Mammary epithelial cell (primary cell): ENCODE measurements at regions of chr17 and their contacts with region 1.

Region 1: GRCh38 chr17:8156246-8156992 is 4.2 kb upstream of the PER1 start:
- DNase-seq: peak; percentile 100
- H3K4me3 ChIP-seq: peak overlapping the region; percentile 85 to 92 (median 88)
- H3K27ac ChIP-seq: peak overlapping the region; percentile 100
- H3K4me1 ChIP-seq: peaks cover 34% of the 10 kb centered on the region
- H3K27me3 ChIP-seq: no peaks in the 10 kb centered on the region
- CTCF ChIP-seq: peak in 1 of 2 donors; percentile 18

Region 2: DNA sequence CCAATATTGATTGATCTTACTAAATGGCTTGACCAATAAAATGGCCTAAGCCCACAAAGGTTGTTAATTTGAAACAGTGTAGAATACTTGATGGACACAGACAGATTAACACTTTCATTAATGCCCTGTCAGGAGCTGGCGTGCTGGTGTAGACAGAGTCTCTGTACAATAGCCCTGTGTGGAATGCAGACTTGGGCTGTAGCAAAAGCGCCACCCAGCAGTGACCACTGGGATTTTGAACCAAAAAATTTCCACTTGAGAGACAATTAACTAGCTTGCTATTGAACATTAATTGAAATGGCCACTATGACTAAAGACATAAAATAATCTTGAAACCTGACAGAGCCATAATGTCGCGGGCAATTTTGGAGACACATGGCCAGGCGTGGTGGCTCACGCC is 173.8 kb before region 1 on chr17:
- CTCF ChIA-PET with region 1: no interaction called
- dilution Hi-C with region 1: no loop called
- in situ Hi-C with region 1: no loop called
- intact Hi-C with region 1: no loop called
- DNase-seq: no peak
- H3K4me3 ChIP-seq: no peak overlapping the region
- H3K27ac ChIP-seq: no peak overlapping the region
- H3K4me1 ChIP-seq: peaks cover 16% of the 10 kb centered on the region
- H3K27me3 ChIP-seq: no peaks in the 10 kb centered on the region
- CTCF ChIP-seq: no peak

Region 3: GRCh38 chr17:8038954-8039610 is 117.3 kb before region 1 on chr17 and contains the start of gene ALOX15B:
- CTCF ChIA-PET with region 1: no interaction called
- dilution Hi-C with region 1: no loop called
- in situ Hi-C with region 1: no loop called
- intact Hi-C with region 1: no loop called
- DNase-seq: no peak
- H3K4me3 ChIP-seq: peak within 1 kb of the TSS; percentile 75 to 82 (median 79)
- H3K27ac ChIP-seq: peak within 1 kb of the TSS; percentile 43
- H3K4me1 ChIP-seq: peaks cover 32% of the 10 kb centered on the region
- H3K27me3 ChIP-seq: no peaks in the 10 kb centered on the region
- CTCF ChIP-seq: no peak
- total RNA-seq, gene ALOX15B: 43.5 to 45.3 TPM

Region 4: GRCh38 chr17:8079291-8080207 is 76.9 kb before region 1 on chr17:
- CTCF ChIA-PET with region 1: no interaction called
- dilution Hi-C with region 1: no loop called
- in situ Hi-C with region 1: no loop called
- intact Hi-C with region 1: loop called (anchors 5 kb)
- DNase-seq: peak; percentile 61
- H3K4me3 ChIP-seq: peak overlapping the region; percentile 28 to 57 (median 52)
- H3K27ac ChIP-seq: no peak overlapping the region
- H3K4me1 ChIP-seq: peaks cover 19% of the 10 kb centered on the region
- H3K27me3 ChIP-seq: no peaks in the 10 kb centered on the region
- CTCF ChIP-seq: peak; percentile 54 to 85

Region 5: GRCh38 chr17:8138672-8139371 is 17.6 kb before region 1 on chr17:
- CTCF ChIA-PET with region 1: no interaction called
- dilution Hi-C with region 1: no loop called
- in situ Hi-C with region 1: no loop called
- intact Hi-C with region 1: loop called (anchors 1 kb)
- DNase-seq: peak; percentile 96
- H3K4me3 ChIP-seq: peak overlapping the region; percentile 10 to 44 (median 29)
- H3K27ac ChIP-seq: peak overlapping the region; percentile 61
- H3K4me1 ChIP-seq: peaks cover 18% of the 10 kb centered on the region
- H3K27me3 ChIP-seq: no peaks in the 10 kb centered on the region
- CTCF ChIP-seq: peak; percentile 83 to 89

Region 6: DNA sequence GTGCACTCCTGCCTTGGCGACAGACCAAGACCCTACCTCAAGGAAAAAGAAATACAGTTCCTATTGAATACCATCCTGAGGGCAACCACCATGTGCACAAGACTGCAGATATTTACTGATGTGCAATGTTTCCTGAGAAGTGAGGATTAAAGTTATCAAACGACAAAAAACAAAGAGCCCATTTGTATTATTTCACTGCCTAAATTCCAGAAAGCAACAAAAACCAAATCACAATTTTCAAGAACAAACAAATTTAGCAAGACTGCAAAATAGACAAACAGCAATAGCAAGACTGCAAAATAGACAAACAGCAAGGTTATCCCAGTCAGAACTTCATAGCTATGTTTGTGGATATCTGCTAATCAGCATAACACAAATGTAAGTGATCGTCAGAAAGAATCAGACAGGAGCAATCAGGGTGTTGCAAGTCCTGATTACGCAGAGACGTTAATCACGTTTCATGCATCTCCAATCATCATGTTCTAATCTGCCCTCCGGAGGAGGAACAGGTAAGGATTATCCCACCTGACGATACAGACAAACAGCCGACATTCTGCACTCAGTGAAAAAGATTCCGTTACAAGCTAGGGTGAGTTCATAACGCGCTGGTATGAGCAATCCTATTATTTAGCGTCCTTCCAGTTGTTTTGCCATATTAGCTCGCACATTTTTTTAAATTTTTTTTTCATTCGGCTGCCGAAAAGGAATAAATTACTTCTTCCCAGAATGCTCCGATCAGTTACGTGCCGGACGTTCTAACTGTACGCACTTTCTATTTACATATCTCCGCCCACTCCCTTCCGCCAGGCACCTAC is 16.8 kb after region 1 on chr17:
- CTCF ChIA-PET with region 1: no interaction called
- dilution Hi-C with region 1: no loop called
- in situ Hi-C with region 1: no loop called
- intact Hi-C with region 1: loop called (anchors 2 kb)
- DNase-seq: peak; percentile 99
- H3K4me3 ChIP-seq: peak overlapping the region; percentile 38 to 53 (median 48)
- H3K27ac ChIP-seq: peak overlapping the region; percentile 100
- H3K4me1 ChIP-seq: peaks cover 25% of the 10 kb centered on the region
- H3K27me3 ChIP-seq: no peaks in the 10 kb centered on the region
- CTCF ChIP-seq: no peak

Region 7: GRCh38 chr17:8393420-8394241 is 237.2 kb after region 1 on chr17:
- CTCF ChIA-PET with region 1: no interaction called
- dilution Hi-C with region 1: no loop called
- in situ Hi-C with region 1: no loop called
- intact Hi-C with region 1: no loop called
- DNase-seq: peak; percentile 84
- H3K4me3 ChIP-seq: no peak overlapping the region
- H3K27ac ChIP-seq: peak overlapping the region; percentile 67
- H3K4me1 ChIP-seq: peaks cover 37% of the 10 kb centered on the region
- H3K27me3 ChIP-seq: no peaks in the 10 kb centered on the region
- CTCF ChIP-seq: no peak

Region 8: DNA sequence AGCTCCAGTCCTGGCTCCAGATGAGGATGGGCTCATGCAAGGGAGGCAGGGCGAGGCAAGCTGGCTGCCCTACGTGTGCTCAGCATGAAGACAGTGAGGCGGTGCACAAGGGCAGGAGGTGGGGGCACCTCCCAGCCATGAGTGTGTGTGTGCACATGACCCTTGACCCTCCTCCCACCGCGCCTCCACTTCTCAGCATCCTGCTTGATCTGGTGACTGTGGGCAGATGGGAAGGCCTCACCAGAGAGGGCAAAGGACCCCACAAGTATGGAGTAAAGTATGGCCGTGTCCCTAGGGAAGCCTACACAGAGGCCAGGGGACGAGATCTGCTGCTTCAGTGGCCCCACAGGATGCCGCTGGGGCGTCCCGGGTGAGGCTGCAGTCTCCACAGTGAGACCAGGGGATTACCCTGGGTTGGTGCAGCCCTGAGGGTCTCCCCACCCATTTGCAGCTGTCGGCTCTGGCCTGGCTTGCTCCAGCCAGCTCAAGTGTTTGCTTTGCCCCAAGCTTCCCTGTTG is 249.1 kb after region 1 on chr17:
- CTCF ChIA-PET with region 1: no interaction called
- dilution Hi-C with region 1: no loop called
- in situ Hi-C with region 1: no loop called
- intact Hi-C with region 1: no loop called
- DNase-seq: no peak
- H3K4me3 ChIP-seq: no peak overlapping the region
- H3K27ac ChIP-seq: no peak overlapping the region
- H3K4me1 ChIP-seq: peaks cover 12% of the 10 kb centered on the region
- H3K27me3 ChIP-seq: no peaks in the 10 kb centered on the region
- CTCF ChIP-seq: no peak